B cell (primary cell): ENCODE measurements at regions of chr15 and their contacts with region 1.

Region 1: GRCh38 chr15:74373731-74374647 is 6.5 kb upstream of the CYP11A1 start:
- DNase-seq: peak; percentile 97
- ATAC-seq: peak; percentile 95
- H3K4me3 ChIP-seq: peak overlapping the region; percentile 8 to 80 (median 77)
- H3K4me3 Mint-ChIP-seq: peak overlapping the region; percentile 60
- H3K27ac ChIP-seq: peak overlapping the region; percentile 38 to 60
- H3K27ac Mint-ChIP-seq: peak overlapping the region; percentile 72
- H3K4me1 ChIP-seq: peaks cover 11 to 20% of the 10 kb centered on the region in 2 donors
- H3K4me1 Mint-ChIP-seq: peaks cover 16% of the 10 kb centered on the region
- H3K27me3 ChIP-seq: no peaks in the 10 kb centered on the region
- H3K27me3 Mint-ChIP-seq: peaks cover 13% of the 10 kb centered on the region
- CTCF ChIP-seq: peak; percentile 95

Region 2: GRCh38 chr15:74433592-74434262 is 59.7 kb after region 1 on chr15 and contains the start of gene SEMA7A:
- CTCF ChIA-PET with region 1: interaction called, 855 read pairs
- POLR2A ChIA-PET with region 1: interaction called, 12 read pairs
- intact Hi-C with region 1: loop called (anchors 1 kb)
- DNase-seq: peak; percentile 92
- ATAC-seq: peak; percentile 80
- H3K4me3 ChIP-seq: peak within 1 kb of the TSS; percentile 60 to 89 (median 82)
- H3K4me3 Mint-ChIP-seq: peak within 1 kb of the TSS; percentile 96
- H3K27ac ChIP-seq: peak within 1 kb of the TSS; percentile 75 to 88
- H3K27ac Mint-ChIP-seq: peak within 1 kb of the TSS; percentile 92
- H3K4me1 ChIP-seq: peaks cover 57 to 69% of the 10 kb centered on the region in 2 donors
- H3K4me1 Mint-ChIP-seq: peaks cover 74% of the 10 kb centered on the region
- H3K27me3 ChIP-seq: no peaks in the 10 kb centered on the region
- H3K27me3 Mint-ChIP-seq: no peaks in the 10 kb centered on the region
- CTCF ChIP-seq: no peak
- total RNA-seq, gene SEMA7A: 39.0 and 44.2 TPM in 2 replicates

Region 3: DNA sequence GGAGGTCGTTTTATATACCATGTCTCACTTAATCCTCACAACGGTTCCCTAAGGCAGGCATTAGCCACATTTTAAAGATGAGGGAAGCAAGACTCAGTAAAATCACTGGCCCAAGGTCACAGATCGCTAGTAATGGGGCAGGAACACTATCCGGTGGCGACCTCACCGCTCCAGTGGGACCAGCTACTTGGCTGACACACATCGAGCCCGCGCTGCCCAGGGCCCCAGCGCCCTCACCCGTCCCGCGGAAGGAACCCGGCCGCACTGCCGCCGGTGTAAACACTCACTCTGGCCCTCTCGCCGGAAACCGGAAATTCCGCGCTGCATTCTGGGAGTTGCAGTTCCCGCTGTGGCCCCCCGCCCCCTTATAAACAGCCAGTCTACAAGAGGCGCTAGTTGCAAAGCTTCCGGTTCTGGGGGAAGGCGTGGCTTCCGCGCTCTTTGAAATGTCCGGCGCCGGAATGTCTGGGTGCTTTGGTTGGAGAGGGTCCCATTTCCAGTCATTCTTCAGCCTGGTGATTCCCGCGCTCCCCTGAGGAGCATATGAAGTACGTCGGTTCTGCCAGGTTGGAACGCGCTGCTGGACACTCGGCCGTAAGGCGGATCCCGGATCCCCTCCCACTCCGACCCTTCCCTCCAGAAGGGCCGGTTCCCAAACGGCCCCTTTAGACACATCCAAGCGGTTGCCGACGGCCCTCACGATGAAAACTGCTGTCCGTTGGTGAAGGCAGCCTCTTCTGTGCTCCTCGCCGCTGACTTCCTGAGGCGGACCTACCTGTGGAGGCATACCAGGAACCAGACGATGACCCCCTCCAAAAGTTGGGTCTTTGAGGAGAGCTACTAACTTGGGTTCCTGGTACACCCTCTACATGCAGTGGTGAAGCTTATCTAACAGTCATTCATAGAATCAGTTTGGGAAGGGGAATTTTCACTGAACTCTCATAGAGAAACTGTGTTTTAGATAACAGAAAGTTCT is 87.2 kb after region 1 on chr15 and contains the start of gene UBL7:
- CTCF ChIA-PET with region 1: interaction called, 16 read pairs
- POLR2A ChIA-PET with region 1: no interaction called
- intact Hi-C with region 1: loop called (anchors 1 kb)
- DNase-seq: peak; percentile 96
- ATAC-seq: peak; percentile 95
- H3K4me3 ChIP-seq: peak within 1 kb of the TSS; percentile 78 to 99 (median 90)
- H3K4me3 Mint-ChIP-seq: peak within 1 kb of the TSS; percentile 92
- H3K27ac ChIP-seq: peak within 1 kb of the TSS; percentile 77 to 80
- H3K27ac Mint-ChIP-seq: peak within 1 kb of the TSS; percentile 76
- H3K4me1 ChIP-seq: peaks cover 30 to 40% of the 10 kb centered on the region in 2 donors
- H3K4me1 Mint-ChIP-seq: peaks cover 39% of the 10 kb centered on the region
- H3K27me3 ChIP-seq: no peaks in the 10 kb centered on the region
- H3K27me3 Mint-ChIP-seq: no peaks in the 10 kb centered on the region
- CTCF ChIP-seq: no peak
- total RNA-seq, gene UBL7: 44.4 and 50.1 TPM in 2 replicates

Region 4: DNA sequence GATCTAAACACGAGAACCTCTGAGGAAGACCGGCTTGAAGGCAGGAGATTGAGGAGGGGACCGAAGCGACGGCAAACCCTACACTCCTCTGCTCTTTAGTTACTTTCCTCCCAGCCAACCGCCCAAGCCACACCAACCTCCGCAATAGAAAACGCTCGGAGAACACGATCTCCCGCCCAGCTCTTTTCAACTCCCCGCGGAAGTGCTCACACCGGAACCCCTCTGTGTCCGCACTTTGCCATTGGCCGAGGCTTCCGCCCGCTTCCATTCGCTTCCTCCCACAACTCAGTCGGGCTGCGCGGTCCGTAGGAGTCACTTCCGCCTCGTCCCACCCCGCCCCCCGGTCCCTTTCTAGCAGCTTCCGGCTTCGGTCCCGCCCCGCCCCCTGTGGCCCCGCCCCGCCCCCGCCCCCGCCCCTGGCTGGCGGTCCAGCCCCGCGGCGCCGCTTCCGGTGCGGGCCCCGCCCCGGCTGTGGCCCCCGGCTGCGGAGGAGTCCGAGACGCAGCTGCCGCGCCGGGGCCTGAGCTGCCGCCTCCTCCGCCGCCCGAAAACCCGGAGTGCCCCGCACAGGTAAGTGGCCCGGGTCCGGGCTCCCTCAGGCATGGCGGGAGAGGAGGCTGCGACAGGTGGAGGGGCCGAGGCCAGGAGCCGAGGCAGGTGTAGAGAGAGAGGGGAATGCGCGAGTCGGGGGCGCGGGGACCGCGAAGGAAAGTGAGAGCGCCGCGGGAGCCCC is 166.9 kb after region 1 on chr15 and contains the start of gene ARID3B:
- CTCF ChIA-PET with region 1: interaction called, 14 read pairs
- POLR2A ChIA-PET with region 1: no interaction called
- intact Hi-C with region 1: loop called (anchors 1 kb)
- DNase-seq: peak; percentile 96
- ATAC-seq: peak; percentile 90
- H3K4me3 ChIP-seq: peak within 1 kb of the TSS; percentile 79 to 100 (median 93)
- H3K4me3 Mint-ChIP-seq: peak within 1 kb of the TSS; percentile 99
- H3K27ac ChIP-seq: peak within 1 kb of the TSS; percentile 77
- H3K27ac Mint-ChIP-seq: peak within 1 kb of the TSS; percentile 97
- H3K4me1 ChIP-seq: peaks cover 26 to 41% of the 10 kb centered on the region in 2 donors
- H3K4me1 Mint-ChIP-seq: peaks cover 46% of the 10 kb centered on the region
- H3K27me3 ChIP-seq: no peaks in the 10 kb centered on the region
- H3K27me3 Mint-ChIP-seq: no peaks in the 10 kb centered on the region
- CTCF ChIP-seq: no peak
- total RNA-seq, gene ARID3B: 30.9 and 31.0 TPM in 2 replicates

Region 5: GRCh38 chr15:74732846-74733245 is 358.9 kb after region 1 on chr15:
- CTCF ChIA-PET with region 1: no interaction called
- POLR2A ChIA-PET with region 1: interaction called, 13 read pairs
- intact Hi-C with region 1: no loop called
- DNase-seq: no peak
- ATAC-seq: no peak
- H3K4me3 ChIP-seq: no peak overlapping the region
- H3K4me3 Mint-ChIP-seq: no peak overlapping the region
- H3K27ac ChIP-seq: no peak overlapping the region
- H3K27ac Mint-ChIP-seq: no peak overlapping the region
- H3K4me1 ChIP-seq: no peaks in the 10 kb centered on the region
- H3K4me1 Mint-ChIP-seq: no peaks in the 10 kb centered on the region
- H3K27me3 ChIP-seq: peaks cover 0 to 33% (median 15%) of the 10 kb centered on the region in 4 experiments
- H3K27me3 Mint-ChIP-seq: peaks cover 56% of the 10 kb centered on the region
- CTCF ChIP-seq: no peak

Region 6: DNA sequence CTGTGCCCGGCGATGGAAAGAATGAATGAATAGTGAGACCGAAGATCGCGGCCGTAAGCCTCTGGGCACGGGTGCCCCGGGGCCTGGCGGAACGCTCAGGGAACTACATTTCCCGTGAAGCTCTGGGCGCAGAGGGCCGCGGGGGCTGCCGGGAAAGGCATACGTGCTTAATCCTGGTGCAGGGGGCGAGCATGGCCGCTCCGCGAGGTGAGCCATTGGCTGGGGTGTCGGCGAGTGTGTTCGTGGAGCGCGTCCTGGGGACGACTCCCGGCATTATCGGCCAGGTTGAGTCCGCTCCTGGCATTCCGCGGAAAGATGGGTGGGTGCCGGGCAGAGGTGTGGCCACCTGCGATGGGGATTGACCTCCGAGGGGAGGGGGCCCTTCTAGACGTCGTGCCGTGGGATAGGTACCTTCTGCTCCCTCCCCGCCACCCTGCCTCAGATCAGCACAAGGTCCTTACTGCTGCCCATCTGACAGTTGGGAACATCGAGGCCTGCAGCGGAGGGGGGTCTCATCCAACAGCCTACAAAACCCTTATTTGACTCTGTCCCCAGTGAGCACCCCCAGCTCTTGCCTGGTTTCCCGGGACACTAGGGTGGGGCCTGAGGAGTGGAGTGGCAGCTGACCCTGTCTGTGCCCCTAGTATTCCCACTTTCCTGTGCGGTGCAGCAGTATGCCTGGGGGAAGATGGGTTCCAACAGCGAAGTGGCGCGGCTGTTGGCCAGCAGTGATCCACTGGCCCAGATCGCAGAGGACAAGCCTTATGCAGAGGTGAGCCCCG is 516.1 kb after region 1 on chr15 and contains the start of gene MPI:
- CTCF ChIA-PET with region 1: no interaction called
- POLR2A ChIA-PET with region 1: no interaction called
- intact Hi-C with region 1: no loop called
- DNase-seq: peak; percentile 87
- ATAC-seq: peak; percentile 99
- H3K4me3 ChIP-seq: peak within 1 kb of the TSS; percentile 53 to 94 (median 87)
- H3K4me3 Mint-ChIP-seq: peak within 1 kb of the TSS; percentile 93
- H3K27ac ChIP-seq: peak within 1 kb of the TSS; percentile 74 to 77
- H3K27ac Mint-ChIP-seq: peak within 1 kb of the TSS; percentile 74
- H3K4me1 ChIP-seq: peaks cover 25 to 38% of the 10 kb centered on the region in 2 donors
- H3K4me1 Mint-ChIP-seq: peaks cover 39% of the 10 kb centered on the region
- H3K27me3 ChIP-seq: no peaks in the 10 kb centered on the region
- H3K27me3 Mint-ChIP-seq: no peaks in the 10 kb centered on the region
- CTCF ChIP-seq: no peak
- total RNA-seq, gene MPI: 37.2 and 41.3 TPM in 2 replicates

Region 7: GRCh38 chr15:74956648-74957300 is 582.8 kb after region 1 on chr15 and contains the start of gene RPP25:
- CTCF ChIA-PET with region 1: no interaction called
- POLR2A ChIA-PET with region 1: no interaction called
- intact Hi-C with region 1: loop called (anchors 5 kb)
- DNase-seq: peak; percentile 84
- ATAC-seq: peak; percentile 91
- H3K4me3 ChIP-seq: peak within 1 kb of the TSS; percentile 39 to 80 (median 53)
- H3K4me3 Mint-ChIP-seq: peak within 1 kb of the TSS; percentile 85
- H3K27ac ChIP-seq: no peak within 1 kb of the TSS
- H3K27ac Mint-ChIP-seq: no peak within 1 kb of the TSS
- H3K4me1 ChIP-seq: peaks cover 38 to 40% of the 10 kb centered on the region in 2 donors
- H3K4me1 Mint-ChIP-seq: peaks cover 30% of the 10 kb centered on the region
- H3K27me3 ChIP-seq: peaks cover 0 to 64% (median 37%) of the 10 kb centered on the region in 4 experiments
- H3K27me3 Mint-ChIP-seq: peaks cover 43% of the 10 kb centered on the region
- CTCF ChIP-seq: no peak
- total RNA-seq, gene RPP25: 3.1 and 4.4 TPM in 2 replicates